Caco-2 (cell line): ENCODE measurements at regions of chr9 and their contacts with region 1.

Region 1: DNA sequence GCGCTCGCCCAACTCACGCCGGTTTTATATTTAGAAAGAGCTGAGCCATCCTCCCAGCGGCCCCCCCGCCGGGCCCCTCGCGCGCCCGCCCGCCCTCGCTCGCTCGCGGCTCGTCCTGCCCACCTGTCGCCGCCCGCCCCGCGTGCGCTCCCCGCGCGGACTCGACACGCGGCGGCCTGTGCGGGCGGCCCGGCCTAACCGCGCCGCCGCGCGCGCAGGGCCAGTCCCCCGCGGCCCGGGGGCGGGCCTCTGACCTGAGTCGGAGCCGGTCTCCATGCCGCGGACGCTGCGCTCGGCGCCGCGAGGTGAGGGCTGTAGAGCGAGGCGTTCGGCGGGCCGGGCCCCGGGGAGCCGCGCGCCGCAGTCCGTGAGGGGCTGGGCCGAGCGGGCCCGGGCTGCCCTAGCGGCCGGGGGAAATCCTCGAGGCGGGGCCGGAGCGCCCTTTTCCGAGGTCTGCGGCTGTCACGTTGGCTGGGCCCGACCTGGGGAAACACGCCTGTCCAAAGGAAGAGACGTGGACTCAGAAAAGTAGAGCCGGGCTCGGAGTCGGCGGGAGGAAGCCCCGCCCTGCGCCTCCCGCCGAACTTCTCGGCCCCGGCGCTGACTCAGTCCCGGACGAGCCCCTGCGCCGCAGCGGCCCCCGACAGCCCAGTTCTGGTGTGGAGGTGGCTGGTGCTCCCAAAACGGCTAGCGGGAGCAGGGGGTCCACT is at the start of gene ECPAS:
- DNase-seq: peak; percentile 87 to 88
- H3K4me3 ChIP-seq: peak within 1 kb of the TSS; percentile 53
- H3K4me3 Mint-ChIP-seq: peak within 1 kb of the TSS; percentile 85
- H3K27ac Mint-ChIP-seq: peak within 1 kb of the TSS; percentile 70
- H3K4me1 ChIP-seq: 0 out of 2 replicates have a peak, but pooled peaks cover 14% of the 10 kb centered on the region
- H3K4me1 Mint-ChIP-seq: peaks cover 11% of the 10 kb centered on the region
- H3K27me3 ChIP-seq: no peaks in the 10 kb centered on the region
- H3K27me3 Mint-ChIP-seq: no peaks in the 10 kb centered on the region
- CTCF ChIP-seq: no peak
- total RNA-seq, gene ECPAS: 66.8 and 77.0 TPM in 2 replicates

Region 2: GRCh38 chr9:111068771-111069170 is 415.2 kb before region 1 on chr9:
- CTCF ChIA-PET with region 1: no interaction called
- POLR2A ChIA-PET with region 1: interaction called, 12 read pairs
- intact Hi-C with region 1: no loop called
- DNase-seq: no peak
- H3K4me3 ChIP-seq: no peak overlapping the region
- H3K4me3 Mint-ChIP-seq: no peak overlapping the region
- H3K27ac Mint-ChIP-seq: no peak overlapping the region
- H3K4me1 ChIP-seq: no peaks in the 10 kb centered on the region
- H3K4me1 Mint-ChIP-seq: no peaks in the 10 kb centered on the region
- H3K27me3 ChIP-seq: no peaks in the 10 kb centered on the region
- H3K27me3 Mint-ChIP-seq: peaks cover 8% of the 10 kb centered on the region
- CTCF ChIP-seq: no peak

Region 3: DNA sequence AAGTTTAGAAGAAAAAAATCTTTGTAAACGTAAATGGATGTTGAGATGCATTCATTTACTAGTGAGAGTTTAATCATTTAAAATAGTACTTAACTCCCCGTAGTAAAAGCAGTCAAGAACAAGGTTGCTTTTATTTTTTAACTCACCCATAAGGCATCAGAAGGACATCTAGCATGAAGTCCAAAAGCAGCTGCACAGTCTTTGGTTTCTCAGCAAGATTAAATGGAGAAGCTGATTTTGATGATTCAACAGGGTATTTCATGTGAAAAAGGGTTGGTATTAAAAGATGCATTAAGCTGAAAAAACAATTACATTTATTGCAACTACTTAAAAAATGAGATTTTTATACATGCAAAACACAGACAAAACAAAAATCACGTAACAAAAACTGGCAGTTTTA is 43.8 kb before region 1 on chr9:
- CTCF ChIA-PET with region 1: no interaction called
- POLR2A ChIA-PET with region 1: no interaction called
- intact Hi-C with region 1: loop called (anchors 5 kb)
- DNase-seq: no peak
- H3K4me3 ChIP-seq: no peak overlapping the region
- H3K4me3 Mint-ChIP-seq: no peak overlapping the region
- H3K27ac Mint-ChIP-seq: no peak overlapping the region
- H3K4me1 ChIP-seq: no peaks in the 10 kb centered on the region; the same call in 1 of the 2 replicates
- H3K4me1 Mint-ChIP-seq: no peaks in the 10 kb centered on the region
- H3K27me3 ChIP-seq: no peaks in the 10 kb centered on the region
- H3K27me3 Mint-ChIP-seq: no peaks in the 10 kb centered on the region
- CTCF ChIP-seq: no peak

Region 4: DNA sequence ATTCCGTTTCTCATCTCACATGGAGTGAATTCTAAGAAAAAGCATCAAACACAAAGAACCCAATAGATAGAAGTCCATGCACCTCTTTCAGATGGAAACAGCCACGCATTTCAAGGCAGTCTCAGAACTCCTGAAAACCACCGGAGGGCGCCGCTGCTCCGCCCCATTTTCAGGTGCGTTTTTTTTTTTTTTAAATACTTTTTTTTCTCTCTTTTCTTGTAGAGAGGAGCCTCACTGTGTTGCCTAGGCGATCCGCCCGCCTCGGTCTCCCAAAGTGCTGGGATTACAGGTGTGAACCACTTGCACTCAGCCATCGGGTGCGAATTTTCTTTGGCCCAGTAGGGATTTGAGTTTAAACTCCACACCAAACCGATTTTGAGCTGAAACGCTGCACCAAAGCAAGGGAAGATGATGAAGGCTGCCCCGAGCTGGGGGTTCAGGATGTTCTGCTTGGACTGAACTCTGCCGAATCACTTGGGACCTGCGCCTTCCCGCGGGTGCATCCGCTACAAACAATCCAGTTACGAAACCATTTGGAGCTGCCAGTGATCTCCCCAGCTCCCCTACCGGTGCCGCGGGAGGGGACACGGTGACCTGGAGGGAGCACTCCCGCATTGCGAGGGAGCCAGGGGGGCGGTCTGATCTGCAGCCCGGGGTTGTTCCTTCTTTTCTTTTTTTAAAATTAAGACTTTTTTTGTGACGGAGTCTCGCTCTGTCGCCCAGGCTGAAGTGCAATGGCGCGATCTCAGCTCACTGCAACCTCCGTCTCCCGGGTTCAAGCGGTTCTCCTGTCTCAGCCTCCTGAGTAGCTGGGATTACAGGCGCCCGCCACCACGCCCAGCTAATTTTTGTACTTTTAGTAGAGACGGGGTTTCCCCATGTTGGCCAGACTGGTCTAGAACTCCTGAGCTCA is 114.1 kb after region 1 on chr9:
- CTCF ChIA-PET with region 1: no interaction called
- POLR2A ChIA-PET with region 1: no interaction called
- intact Hi-C with region 1: loop called (anchors 10 kb)
- DNase-seq: peak; percentile 76 to 77
- H3K4me3 ChIP-seq: peak overlapping the region; percentile 61
- H3K4me3 Mint-ChIP-seq: peak overlapping the region; percentile 78
- H3K27ac Mint-ChIP-seq: peak overlapping the region; percentile 80
- H3K4me1 ChIP-seq: peaks cover 17% of the 10 kb centered on the region
- H3K4me1 Mint-ChIP-seq: peaks cover 12% of the 10 kb centered on the region
- H3K27me3 ChIP-seq: no peaks in the 10 kb centered on the region
- H3K27me3 Mint-ChIP-seq: no peaks in the 10 kb centered on the region
- CTCF ChIP-seq: peak; percentile 80 to 84